Stomach (tissue), 19 donors: ENCODE measurements at regions of chr9 and their contacts with region 1.

Region 1: GRCh38 chr9:107340920-107341632 is 58.0 kb downstream of the RAD23B start:
- DNase-seq: peak; percentile 88 to 89
- H3K4me3 ChIP-seq: peak overlapping the region in 1 of 4 donors; percentile 19
- H3K27ac ChIP-seq: peak overlapping the region in 2 of 5 donors; percentile 3 to 68
- H3K4me1 ChIP-seq: peaks cover 0 to 24% (median 15%) of the 10 kb centered on the region in 4 donors
- H3K27me3 ChIP-seq: no peaks in the 10 kb centered on the region
- CTCF ChIP-seq: peak in 5 of 7 experiments; percentile 71 to 91 (median 88)
- EP300 ChIP-seq: no peak
- POLR2A ChIP-seq: no peak

Region 2: GRCh38 chr9:107102677-107103076 is 238.4 kb before region 1 on chr9:
- intact Hi-C with region 1: no loop called
- DNase-seq: no peak
- H3K4me3 ChIP-seq: no peak overlapping the region
- H3K27ac ChIP-seq: no peak overlapping the region
- H3K4me1 ChIP-seq: no peaks in the 10 kb centered on the region
- H3K27me3 ChIP-seq: no peaks in the 10 kb centered on the region
- CTCF ChIP-seq: no peak
- EP300 ChIP-seq: no peak
- POLR2A ChIP-seq: no peak

Region 3: GRCh38 chr9:107239474-107239873 is 101.6 kb before region 1 on chr9:
- intact Hi-C with region 1: loop called (anchors 10 kb)
- DNase-seq: peak in 1 of 2 donors; percentile 34
- H3K4me3 ChIP-seq: no peak overlapping the region
- H3K27ac ChIP-seq: no peak overlapping the region
- H3K4me1 ChIP-seq: no peaks in the 10 kb centered on the region
- H3K27me3 ChIP-seq: no peaks in the 10 kb centered on the region
- CTCF ChIP-seq: peak in 3 of 7 experiments; percentile 19 to 53 (median 37)
- EP300 ChIP-seq: no peak
- POLR2A ChIP-seq: no peak

Region 4: DNA sequence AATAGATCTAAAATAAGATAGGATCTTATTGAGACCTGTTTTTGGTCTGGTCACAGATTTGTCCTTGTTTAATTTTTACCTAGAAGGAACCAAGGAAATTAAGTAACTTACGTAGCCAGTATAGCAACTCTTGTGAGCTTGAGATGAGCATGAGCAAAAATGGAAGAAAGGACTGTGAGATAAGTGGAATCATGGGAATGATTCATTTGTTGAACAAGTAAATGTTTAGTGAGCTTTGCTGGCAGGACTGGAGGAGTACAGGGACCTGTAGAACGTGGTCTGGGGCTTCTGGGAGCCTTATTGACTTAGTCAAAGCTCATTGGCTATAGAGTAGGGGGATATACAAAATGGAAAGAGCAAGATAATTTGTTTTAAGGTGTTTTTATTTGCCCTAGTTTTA is 55.0 kb before region 1 on chr9:
- intact Hi-C with region 1: no loop called
- DNase-seq: peak in 1 of 2 donors; percentile 58
- H3K4me3 ChIP-seq: peak overlapping the region in 2 of 4 donors; percentile 78 to 97
- H3K27ac ChIP-seq: peak overlapping the region in 1 of 5 donors; percentile 19
- H3K4me1 ChIP-seq: peaks cover 28 to 77% (median 63%) of the 10 kb centered on the region in 4 donors
- H3K27me3 ChIP-seq: no peaks in the 10 kb centered on the region
- CTCF ChIP-seq: no peak
- EP300 ChIP-seq: no peak
- POLR2A ChIP-seq: no peak